Esophagus squamous epithelium (tissue), 5 donors: ENCODE measurements at regions of chr12 and their contacts with region 1.

Region 1: DNA sequence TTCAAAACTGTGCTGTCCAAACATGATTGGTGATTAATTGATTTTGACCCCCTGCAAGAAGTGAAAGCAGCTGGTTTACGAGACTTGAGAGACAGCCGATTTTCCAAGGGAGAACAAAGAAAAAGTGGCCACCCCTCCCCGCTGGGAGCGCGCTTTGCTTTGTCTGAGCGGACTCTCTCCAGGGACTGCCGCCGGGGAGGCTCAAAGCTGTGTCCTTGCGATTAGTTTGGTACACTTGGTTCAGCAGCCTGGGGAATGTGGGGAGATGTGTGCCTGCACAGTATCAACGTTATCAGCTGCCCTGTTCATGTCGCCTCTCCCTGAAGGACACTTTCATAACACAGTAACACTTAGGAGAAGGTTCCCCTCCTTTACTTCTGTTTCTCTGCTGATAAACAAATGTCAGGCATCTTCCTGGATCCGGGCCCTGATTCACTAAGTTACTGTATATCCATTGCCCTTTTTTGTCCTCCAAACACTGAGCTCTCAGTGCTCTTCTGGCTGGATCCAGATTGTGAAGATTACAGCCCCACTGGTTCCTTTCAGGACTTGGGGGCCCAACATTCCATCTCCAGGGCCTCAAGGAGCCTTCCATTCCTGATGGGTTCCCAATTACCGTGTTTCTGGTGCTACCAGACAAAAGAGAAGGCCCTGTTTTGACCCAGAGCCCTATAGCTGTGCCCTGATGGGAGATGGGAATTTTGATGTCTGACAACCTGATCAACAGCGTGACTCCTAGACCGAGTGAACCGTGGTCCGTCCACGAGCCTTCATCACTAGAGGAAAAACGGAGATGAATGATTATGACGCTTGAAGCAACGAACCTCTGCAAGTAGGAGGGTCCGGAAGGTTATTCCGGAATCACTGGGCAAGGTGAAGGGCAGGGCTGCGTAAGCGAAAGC is 31.7 kb upstream of the TUBA1C start:
- DNase-seq: no peak
- H3K4me3 ChIP-seq: peak overlapping the region in 3 of 4 donors; percentile 9 to 63 (median 56)
- H3K27ac ChIP-seq: peak overlapping the region; percentile 8 to 91 (median 90)
- H3K4me1 ChIP-seq: peaks cover 7 to 32% (median 14%) of the 10 kb centered on the region in 3 donors
- H3K27me3 ChIP-seq: no peaks in the 10 kb centered on the region
- CTCF ChIP-seq: no peak
- POLR2A ChIP-seq: no peak

Region 2: GRCh38 chr12:48988030-48988649 is 245.1 kb before region 1 on chr12:
- intact Hi-C with region 1: no loop called
- DNase-seq: no peak
- H3K4me3 ChIP-seq: no peak overlapping the region
- H3K27ac ChIP-seq: no peak overlapping the region
- H3K4me1 ChIP-seq: peaks cover 0 to 8% (median 0%) of the 10 kb centered on the region in 3 donors
- H3K27me3 ChIP-seq: peaks cover 0 to 99% (median 0%) of the 10 kb centered on the region in 4 donors
- CTCF ChIP-seq: peak; percentile 60 to 87 (median 75)
- POLR2A ChIP-seq: no peak

Region 3: GRCh38 chr12:49098035-49098451 is 135.1 kb before region 1 on chr12:
- intact Hi-C with region 1: loop called (anchors 10 kb)
- DNase-seq: no peak
- H3K4me3 ChIP-seq: no peak overlapping the region
- H3K27ac ChIP-seq: no peak overlapping the region
- H3K4me1 ChIP-seq: peaks cover 15 to 21% (median 15%) of the 10 kb centered on the region in 3 donors
- H3K27me3 ChIP-seq: peaks cover 6 to 21% (median 9%) of the 10 kb centered on the region in 4 donors
- CTCF ChIP-seq: peak; percentile 51 to 79 (median 68)
- POLR2A ChIP-seq: no peak

Region 4: GRCh38 chr12:49130151-49131050 is 102.8 kb before region 1 on chr12:
- intact Hi-C with region 1: loop called (anchors 5 kb)
- DNase-seq: peak; percentile 65
- H3K4me3 ChIP-seq: peak overlapping the region; percentile 89 to 99 (median 94)
- H3K27ac ChIP-seq: peak overlapping the region; percentile 98 to 100 (median 100)
- H3K4me1 ChIP-seq: peaks cover 20 to 44% (median 23%) of the 10 kb centered on the region in 3 donors
- H3K27me3 ChIP-seq: no peaks in the 10 kb centered on the region
- CTCF ChIP-seq: peak; percentile 81 to 95 (median 90)
- POLR2A ChIP-seq: peak in 1 of 4 donors; percentile 53

Region 5: DNA sequence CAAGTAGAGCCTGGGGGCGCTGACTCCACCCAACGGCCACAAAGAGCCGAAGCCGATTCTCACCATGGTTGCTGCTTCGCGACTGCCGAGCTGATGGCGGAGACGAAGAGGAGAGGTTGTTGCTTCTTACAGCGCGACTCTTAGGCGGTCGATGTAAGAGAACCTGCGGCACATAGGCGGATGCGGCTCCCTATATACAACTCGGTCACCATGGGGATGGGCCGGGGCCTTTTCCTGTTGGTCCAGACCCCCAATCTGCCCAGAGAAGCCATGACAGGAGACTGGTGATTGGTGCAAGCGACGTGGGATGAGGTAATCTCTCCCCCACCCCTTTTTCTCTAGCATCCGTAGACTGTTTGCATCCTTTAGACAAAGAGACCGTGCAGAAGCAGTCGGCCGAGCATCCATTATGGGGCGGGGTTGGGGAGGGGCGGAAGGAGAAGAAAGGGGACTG is 44.2 kb before region 1 on chr12 and contains the start of gene TUBA1A:
- intact Hi-C with region 1: loop called (anchors 10 kb)
- DNase-seq: peak; percentile 79
- H3K4me3 ChIP-seq: peak within 1 kb of the TSS; percentile 66 to 98 (median 82)
- H3K27ac ChIP-seq: peak within 1 kb of the TSS; percentile 91 to 99 (median 95)
- H3K4me1 ChIP-seq: peaks cover 0 to 33% (median 13%) of the 10 kb centered on the region in 3 donors
- H3K27me3 ChIP-seq: no peaks in the 10 kb centered on the region
- CTCF ChIP-seq: no peak
- POLR2A ChIP-seq: peak in 3 of 4 donors; percentile 7 to 96 (median 91)
- total RNA-seq, gene TUBA1A: 14.5 to 91.0 (median 46.2) TPM